Activated T-helper 1 cell treated with anti-CD3 and anti-CD28 coated beads, Interleukin-12 subunit alpha, Interleukin-12 subunit beta, Interleukin-2, Interleukin-4 antibody, amounts not matched to agents 30 ng/mL and 10 ng/mL and 1 ng/mL, durations not matched to agents 14 hours and 24 hours and 36 hours (primary cell): ENCODE measurements at regions of chr11 and their contacts with region 1.

Region 1: GRCh38 chr11:61332797-61333549 is at the starts of genes DDB1 and TKFC:
- DNase-seq: peak; percentile 98
- H3K4me3 Mint-ChIP-seq: peak within 1 kb of the TSS; percentile 93
- H3K27ac Mint-ChIP-seq: peak within 1 kb of the TSS; percentile 97
- H3K4me1 Mint-ChIP-seq: peaks cover 58% of the 10 kb centered on the region
- H3K27me3 Mint-ChIP-seq: no peaks in the 10 kb centered on the region
- total RNA-seq, gene DDB1: 259 and 270 TPM in 2 replicates
- total RNA-seq, gene TKFC: 71.2 and 78.2 TPM in 2 replicates

Region 2: DNA sequence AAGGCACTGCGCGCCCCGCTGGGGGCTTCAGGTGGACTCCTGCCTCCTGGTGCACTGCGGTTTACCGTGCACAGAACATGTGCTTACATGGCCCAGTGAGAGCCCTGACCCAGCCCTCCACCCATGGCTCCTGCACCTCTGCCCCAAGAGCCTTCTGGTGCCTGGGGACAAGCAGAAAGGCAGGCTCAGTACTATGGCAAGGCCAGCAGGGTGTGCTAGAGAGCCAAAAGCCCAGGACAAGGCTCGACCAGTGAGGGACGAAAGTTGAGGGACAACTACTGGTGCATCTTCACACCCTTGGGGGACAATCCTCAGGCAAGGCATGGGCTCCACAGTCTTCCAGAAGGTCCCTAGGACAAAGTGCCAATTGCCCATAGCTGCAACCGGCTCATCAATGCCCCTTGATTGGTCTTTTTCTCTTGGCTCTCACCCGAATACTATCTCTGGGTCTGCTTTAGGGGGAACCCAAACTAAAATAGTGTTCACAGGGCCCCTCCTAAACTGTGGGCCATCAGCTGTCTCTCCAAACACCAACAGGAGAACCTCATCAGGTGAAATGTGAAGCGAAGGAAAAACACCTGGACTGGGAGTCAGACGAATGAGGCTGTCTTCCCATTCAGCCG is 78.5 kb before region 1 on chr11:
- intact Hi-C with region 1: loop called (anchors 10 kb)
- DNase-seq: peak; percentile 58
- H3K4me3 Mint-ChIP-seq: no peak overlapping the region
- H3K27ac Mint-ChIP-seq: no peak overlapping the region
- H3K4me1 Mint-ChIP-seq: no peaks in the 10 kb centered on the region
- H3K27me3 Mint-ChIP-seq: peaks cover 3% of the 10 kb centered on the region

Region 3: GRCh38 chr11:61361686-61362541 is 28.9 kb after region 1 on chr11 and contains the starts of genes CYB561A3 and TMEM138:
- intact Hi-C with region 1: loop called (anchors 1 kb)
- DNase-seq: peak; percentile 90
- H3K4me3 Mint-ChIP-seq: peak within 1 kb of the TSS; percentile 98
- H3K27ac Mint-ChIP-seq: peak within 1 kb of the TSS; percentile 95
- H3K4me1 Mint-ChIP-seq: peaks cover 45% of the 10 kb centered on the region
- H3K27me3 Mint-ChIP-seq: no peaks in the 10 kb centered on the region
- total RNA-seq, gene CYB561A3: 38.1 and 42.3 TPM in 2 replicates
- total RNA-seq, gene TMEM138: 68.4 and 71.7 TPM in 2 replicates

Region 4: DNA sequence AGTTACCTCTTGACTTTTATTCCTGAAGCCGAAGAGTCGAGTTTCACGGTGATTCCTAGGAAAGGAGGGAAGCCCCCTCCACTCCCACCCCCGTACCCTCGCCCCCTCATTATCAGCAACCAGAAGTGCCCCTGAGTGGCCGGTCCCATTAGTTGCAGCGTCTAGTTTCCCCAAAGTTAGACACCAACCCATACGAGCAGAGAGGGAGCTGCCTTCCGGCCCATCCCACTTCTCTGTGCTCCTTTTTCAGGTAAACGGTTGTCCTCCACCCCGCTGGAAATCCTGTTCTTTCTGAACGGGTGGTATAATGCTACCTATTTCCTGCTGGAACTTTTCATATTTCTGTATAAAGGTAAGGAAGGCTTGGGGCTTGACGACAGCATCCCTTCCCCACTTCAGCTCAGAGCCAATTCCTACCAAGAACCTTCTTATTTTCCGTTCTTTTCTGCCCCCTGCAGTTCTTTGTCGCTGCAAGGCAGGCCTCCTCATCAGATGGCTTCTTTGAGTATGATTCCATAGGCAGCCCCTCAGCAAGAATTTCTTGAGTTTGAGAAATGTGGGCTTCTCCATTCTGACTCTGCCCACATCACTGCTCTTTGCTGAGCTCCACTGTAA is 60.1 kb after region 1 on chr11:
- intact Hi-C with region 1: loop called (anchors 1 kb)
- DNase-seq: no peak
- H3K4me3 Mint-ChIP-seq: peak overlapping the region; percentile 88
- H3K27ac Mint-ChIP-seq: peak overlapping the region; percentile 89
- H3K4me1 Mint-ChIP-seq: peaks cover 26% of the 10 kb centered on the region
- H3K27me3 Mint-ChIP-seq: no peaks in the 10 kb centered on the region

Region 5: DNA sequence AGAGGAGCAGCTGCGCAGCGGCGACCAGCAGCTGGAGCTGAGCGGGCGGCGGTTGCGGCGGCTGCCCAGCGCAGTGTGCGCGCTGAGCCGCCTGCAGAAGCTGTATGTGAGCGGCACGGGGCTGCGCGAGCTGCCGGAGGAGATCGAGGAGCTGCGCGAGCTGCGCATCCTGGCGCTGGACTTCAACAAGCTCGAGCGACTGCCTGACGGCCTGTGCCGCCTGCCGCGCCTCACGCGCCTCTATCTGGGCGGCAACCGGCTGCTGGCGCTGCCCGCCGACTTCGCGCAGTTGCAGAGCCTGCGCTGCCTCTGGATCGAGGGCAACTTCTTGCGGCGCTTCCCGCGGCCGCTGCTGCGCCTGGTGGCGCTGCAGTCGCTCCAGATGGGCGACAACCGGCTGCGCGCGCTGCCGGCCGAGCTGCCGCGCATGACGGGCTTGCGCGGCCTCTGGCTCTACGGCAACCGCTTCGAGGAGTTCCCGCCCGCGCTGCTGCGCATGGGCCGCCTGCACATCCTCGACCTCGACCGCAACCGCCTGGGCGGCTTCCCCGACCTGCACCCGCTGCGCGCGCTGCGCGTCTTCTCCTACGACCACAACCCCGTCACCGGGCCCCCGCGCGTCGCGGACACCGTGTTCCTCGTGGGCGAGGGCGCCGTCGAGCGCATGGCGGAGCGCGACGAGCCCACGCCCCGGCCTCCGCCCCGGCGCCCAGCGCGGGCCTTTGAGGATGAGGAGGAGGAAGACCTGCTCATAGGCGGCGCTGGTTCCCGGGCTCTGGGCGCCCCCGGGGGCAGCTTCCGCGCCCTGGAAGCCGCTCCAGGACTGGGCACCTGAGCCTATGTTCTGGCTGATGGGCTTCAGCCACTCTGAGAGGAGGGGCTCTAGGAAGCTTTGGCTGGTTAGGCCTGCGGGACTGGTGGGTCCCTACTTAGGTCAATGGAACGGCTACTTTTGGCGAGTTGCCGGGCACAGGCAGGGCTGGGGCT is 176.4 kb after region 1 on chr11:
- intact Hi-C with region 1: loop called (anchors 10 kb)
- DNase-seq: peak; percentile 70
- H3K4me3 Mint-ChIP-seq: peak overlapping the region; percentile 19
- H3K27ac Mint-ChIP-seq: no peak overlapping the region
- H3K4me1 Mint-ChIP-seq: peaks cover 6% of the 10 kb centered on the region
- H3K27me3 Mint-ChIP-seq: peaks cover 41% of the 10 kb centered on the region